Ascending aorta (tissue), 2 donors: ENCODE measurements at regions of chr10 and their contacts with region 1.

Region 1: GRCh38 chr10:28060031-28060607 is 61.2 kb upstream of the ODAD2 start:
- DNase-seq: no peak
- H3K4me3 ChIP-seq: no peak overlapping the region
- H3K27ac ChIP-seq: peak overlapping the region in 1 of 2 donors; percentile 48
- H3K4me1 ChIP-seq: peaks cover 0 to 9% of the 10 kb centered on the region in 2 donors
- H3K27me3 ChIP-seq: no peaks in the 10 kb centered on the region
- CTCF ChIP-seq: no peak

Region 2: DNA sequence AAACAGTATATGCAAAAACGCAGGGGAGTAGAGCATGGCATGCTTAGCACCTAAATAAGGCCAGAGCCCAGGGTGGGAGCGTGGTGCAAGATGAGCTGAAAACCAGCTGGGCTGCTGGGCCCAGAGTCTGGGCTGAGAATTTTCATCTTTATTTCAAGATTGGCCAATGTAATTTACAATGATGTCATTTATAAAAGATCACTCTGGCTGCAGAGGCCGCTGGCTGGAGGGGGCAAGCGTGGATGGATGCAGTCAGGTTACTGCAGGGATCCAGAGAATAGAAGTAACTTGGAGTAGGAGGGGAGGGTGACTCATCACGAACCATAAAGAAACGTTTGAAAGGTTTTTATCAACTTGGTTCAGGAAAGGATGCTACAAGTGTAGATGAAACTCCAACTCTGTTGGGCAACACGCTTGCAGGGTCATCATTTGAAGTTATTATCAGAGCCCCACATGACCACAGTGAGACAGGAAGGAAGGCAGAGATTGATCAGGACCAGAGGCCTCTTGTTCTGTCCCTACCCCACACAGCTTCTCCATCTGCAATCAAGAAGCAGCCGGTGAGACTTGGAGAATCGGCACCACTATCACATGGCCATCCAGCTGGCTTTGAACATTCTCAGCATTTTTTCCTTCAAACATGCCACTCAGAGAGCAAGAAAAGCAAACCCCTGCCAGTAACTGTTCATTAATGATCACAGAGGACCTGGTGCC is 110.4 kb before region 1 on chr10:
- intact Hi-C with region 1: no loop called
- DNase-seq: no peak
- H3K4me3 ChIP-seq: no peak overlapping the region
- H3K27ac ChIP-seq: no peak overlapping the region
- H3K4me1 ChIP-seq: peaks cover 0 to 6% of the 10 kb centered on the region in 2 donors
- H3K27me3 ChIP-seq: no peaks in the 10 kb centered on the region
- CTCF ChIP-seq: no peak

Region 3: DNA sequence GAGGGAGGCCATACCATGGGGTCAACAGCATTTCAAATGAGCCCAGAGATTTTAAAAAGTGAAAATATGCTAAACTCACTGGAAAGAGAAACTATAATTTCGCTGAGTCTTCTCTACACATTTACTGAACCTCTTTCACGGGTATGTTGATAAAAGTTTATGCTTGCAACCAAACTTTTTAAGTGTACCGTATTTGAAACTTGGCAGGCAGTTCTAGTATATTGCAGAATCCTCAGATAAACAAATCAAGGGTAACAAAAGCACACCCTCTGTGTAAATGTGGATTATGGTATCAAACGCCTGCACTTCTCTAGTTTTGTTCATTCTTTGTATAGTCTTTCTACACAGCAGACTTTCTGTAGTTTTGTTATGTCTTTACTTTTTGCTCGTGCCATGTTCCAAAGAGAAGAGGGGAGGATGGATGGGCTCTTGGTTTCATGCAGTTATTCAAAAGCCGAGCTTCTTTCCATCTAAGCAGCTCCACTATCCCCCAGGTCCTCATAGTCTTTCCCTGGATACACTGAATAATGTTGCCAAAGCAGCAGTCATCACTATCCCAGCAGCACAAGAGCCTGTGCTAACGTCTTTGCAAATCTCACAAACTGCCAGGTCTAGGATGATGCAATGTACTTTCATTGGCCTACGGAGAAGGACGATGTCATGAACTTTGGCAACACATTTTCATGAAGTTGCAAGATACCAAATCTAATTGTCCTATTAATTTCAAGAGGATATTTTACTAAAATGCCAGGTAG is 111.5 kb after region 1 on chr10:
- intact Hi-C with region 1: loop called (anchors 5 kb)
- DNase-seq: no peak
- H3K4me3 ChIP-seq: peak overlapping the region in 1 of 2 donors; percentile 35
- H3K27ac ChIP-seq: peak overlapping the region in 1 of 2 donors; percentile 48
- H3K4me1 ChIP-seq: peaks cover 0 to 5% of the 10 kb centered on the region in 2 donors
- H3K27me3 ChIP-seq: no peaks in the 10 kb centered on the region
- CTCF ChIP-seq: no peak

Region 4: DNA sequence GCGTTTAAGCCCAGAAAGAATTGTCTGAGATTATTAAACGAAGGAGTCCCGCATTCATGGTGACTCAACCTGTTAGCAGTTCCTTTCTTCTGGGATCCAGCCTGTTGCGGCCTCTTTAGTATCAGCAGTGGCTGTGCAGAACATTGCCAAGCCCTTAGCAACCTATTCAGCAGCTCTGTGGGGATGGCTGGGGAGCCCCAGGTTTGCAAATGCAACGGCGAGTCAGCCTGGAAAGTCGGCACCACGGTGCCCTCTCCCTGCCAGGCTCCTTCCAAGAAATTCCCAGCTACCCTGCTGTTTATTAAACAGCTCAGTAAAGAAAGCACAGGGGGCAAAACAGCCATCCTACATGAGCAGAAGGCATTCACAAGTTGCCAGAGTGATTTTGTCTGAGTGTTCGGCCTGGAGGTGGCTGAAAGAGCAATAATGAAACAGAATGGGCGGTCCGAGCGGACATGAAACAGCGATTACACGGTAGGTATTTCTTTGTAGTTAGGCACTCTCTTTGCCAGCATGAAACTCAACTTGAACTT is 815.5 kb after region 1 on chr10:
- intact Hi-C with region 1: no loop called
- DNase-seq: no peak
- H3K4me3 ChIP-seq: no peak overlapping the region
- H3K27ac ChIP-seq: no peak overlapping the region
- H3K4me1 ChIP-seq: peaks cover 4 to 11% of the 10 kb centered on the region in 2 donors
- H3K27me3 ChIP-seq: no peaks in the 10 kb centered on the region
- CTCF ChIP-seq: no peak